ENCODE measurements at regions of chr13 and their contacts with region 1.

Region 1: DNA sequence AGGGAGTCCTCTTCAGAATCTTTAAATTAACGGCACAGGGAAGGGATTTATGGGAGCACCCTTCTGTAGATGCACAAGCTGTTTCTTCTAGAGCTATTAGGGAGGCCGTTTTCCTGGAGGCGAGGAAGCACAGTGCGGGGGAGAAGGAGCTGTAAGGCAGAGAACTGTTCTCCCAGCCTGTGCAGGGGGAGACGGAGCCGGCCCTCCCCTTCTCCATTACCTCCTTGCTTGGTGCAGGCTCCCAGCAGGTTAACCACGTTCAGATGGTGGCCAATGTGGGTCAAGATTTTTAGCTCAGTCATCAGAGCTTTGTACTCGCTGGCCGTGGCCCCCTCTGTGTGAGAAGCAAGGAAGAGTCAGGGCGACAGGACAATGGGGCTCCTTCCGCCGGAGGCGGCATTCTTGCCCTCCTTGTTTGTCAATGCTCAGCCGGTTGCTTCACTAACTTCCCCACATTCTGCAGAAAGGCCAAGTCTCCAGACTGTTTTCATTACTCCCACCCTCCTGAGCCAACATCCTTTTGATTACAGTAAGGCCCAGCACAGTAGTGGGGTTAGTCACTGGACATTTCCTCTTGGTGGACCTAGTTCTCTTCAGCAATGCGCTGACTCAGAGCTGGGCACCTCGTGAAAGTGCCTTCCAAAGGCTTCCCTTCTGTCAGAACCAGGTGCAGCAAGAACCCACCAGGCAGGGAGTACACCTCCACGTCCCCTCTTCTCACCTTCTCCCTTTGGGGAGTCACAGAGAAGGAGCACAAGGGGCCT is 165.4 kb downstream of the FLT1 start:
- DNase-seq: peak in 1 of 2 donors; percentile 43
- ATAC-seq: peak; percentile 59 to 89 (median 74)
- H3K4me3 ChIP-seq: no peak overlapping the region
- H3K27ac ChIP-seq: peak overlapping the region in 7 of 10 donors; percentile 3 to 72 (median 33)
- H3K4me1 ChIP-seq: peaks cover 6 to 53% (median 28%) of the 10 kb centered on the region in 9 donors
- H3K27me3 ChIP-seq: peaks cover 0 to 21% (median 0%) of the 10 kb centered on the region in 7 donors
- CTCF ChIP-seq: no peak

Region 2: DNA sequence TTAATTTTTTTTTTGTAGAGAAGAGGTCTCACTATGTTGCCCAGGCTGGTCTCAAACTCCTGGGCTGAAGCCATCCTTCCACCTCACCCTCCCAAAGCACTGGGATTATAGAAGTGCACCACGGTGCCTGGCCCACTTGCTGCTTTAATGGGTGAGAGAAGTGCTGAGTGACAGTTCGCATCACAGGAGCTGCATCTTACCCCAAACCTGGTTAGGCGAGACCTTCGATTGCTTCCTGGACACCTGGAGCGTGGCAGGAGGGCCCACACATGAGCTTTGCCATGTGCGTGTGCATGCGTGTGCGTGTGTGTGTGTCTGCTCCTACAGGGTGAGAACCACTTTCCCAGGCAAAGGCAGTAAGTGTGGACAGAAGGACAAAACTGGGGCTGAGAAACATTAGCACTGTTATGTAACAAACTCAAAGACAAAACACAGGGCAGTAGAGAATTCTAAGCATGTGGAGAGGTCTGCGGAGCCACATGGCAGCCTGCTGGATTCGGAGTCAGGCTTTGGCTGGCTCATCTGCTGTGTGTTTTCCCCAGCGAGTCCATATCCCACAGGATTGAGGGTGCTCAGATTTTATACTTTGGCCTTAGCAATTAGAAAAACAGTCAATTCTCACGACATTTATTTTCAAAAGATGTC is 867.5 kb before region 1 on chr13:
- intact Hi-C with region 1: no loop called
- DNase-seq: no peak
- ATAC-seq: peak; percentile 56 to 85 (median 72)
- H3K4me3 ChIP-seq: no peak overlapping the region
- H3K27ac ChIP-seq: peak overlapping the region in 5 of 10 donors; percentile 16 to 57 (median 38)
- H3K4me1 ChIP-seq: peaks cover 0 to 19% (median 11%) of the 10 kb centered on the region in 9 donors
- H3K27me3 ChIP-seq: no peaks in the 10 kb centered on the region
- CTCF ChIP-seq: no peak

Region 3: DNA sequence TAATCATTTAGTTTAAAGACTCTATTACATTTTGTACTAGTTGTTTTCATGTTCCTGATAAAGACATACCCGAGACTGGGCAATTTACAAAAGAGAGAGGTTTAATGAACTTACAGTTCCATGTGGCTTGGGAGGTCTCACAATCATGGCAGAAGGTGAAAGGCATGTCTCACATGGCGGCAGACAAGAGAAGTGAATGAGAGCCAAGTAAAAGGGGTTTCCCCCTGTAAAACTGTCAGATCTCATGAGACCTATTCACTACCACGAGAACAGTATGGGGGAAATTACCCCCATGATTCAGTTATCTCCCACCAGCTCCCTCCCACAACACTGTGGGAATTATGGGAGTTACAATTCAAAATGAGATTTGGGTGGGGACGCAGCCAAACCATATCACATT is 62.1 kb before region 1 on chr13:
- intact Hi-C with region 1: no loop called
- DNase-seq: no peak
- ATAC-seq: no peak
- H3K4me3 ChIP-seq: no peak overlapping the region
- H3K27ac ChIP-seq: no peak overlapping the region
- H3K4me1 ChIP-seq: no peaks in the 10 kb centered on the region
- H3K27me3 ChIP-seq: no peaks in the 10 kb centered on the region
- CTCF ChIP-seq: no peak

Region 4: GRCh38 chr13:28301839-28302238 is 27.7 kb before region 1 on chr13:
- intact Hi-C with region 1: no loop called
- DNase-seq: no peak
- ATAC-seq: no peak
- H3K4me3 ChIP-seq: no peak overlapping the region
- H3K27ac ChIP-seq: no peak overlapping the region
- H3K4me1 ChIP-seq: no peaks in the 10 kb centered on the region
- H3K27me3 ChIP-seq: peaks cover 0 to 3% (median 0%) of the 10 kb centered on the region in 7 donors
- CTCF ChIP-seq: no peak

Region 5: DNA sequence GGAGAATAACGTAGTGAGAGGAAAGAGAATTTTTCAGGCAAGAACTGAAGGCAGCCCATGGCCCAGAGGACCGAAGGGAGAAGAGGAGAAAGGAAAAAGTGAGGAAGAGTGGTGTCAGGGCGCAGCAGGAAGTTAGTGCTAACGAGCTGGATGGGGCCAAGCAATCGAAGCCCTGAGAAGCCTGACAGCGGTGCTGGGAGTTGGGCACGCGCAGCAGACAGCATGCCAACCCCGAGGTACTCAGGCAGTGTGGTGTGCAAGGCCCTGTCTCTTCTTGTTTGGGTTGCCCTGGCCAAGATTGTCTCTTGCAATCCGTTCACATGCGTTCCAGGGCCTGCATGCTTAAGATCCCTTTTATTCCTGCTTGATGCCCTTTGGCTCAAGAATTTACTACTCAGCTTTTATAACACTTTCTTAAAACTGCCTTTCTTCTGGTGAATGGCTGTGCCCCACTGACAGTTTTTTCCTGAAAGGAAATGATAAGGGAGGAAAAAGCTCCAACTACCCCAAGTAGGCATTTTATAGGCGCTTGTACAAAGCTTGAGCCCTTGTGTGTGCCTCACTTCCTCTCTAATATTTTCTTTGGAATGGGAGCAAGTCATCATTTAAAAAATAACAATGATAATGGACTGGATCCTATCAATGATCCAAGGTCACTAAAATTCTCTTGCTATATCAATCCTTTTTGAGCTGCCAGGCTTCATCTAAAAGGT is 50.0 kb after region 1 on chr13:
- intact Hi-C with region 1: loop called in 1 of 10 experiments (anchors 5 kb)
- DNase-seq: no peak
- ATAC-seq: peak in 1 of 8 donors; percentile 16
- H3K4me3 ChIP-seq: no peak overlapping the region
- H3K27ac ChIP-seq: peak overlapping the region in 2 of 10 donors; percentile 3 to 49
- H3K4me1 ChIP-seq: peaks cover 0 to 36% (median 19%) of the 10 kb centered on the region in 9 donors
- H3K27me3 ChIP-seq: peaks cover 0 to 74% (median 0%) of the 10 kb centered on the region in 7 donors
- CTCF ChIP-seq: no peak

Region 6: DNA sequence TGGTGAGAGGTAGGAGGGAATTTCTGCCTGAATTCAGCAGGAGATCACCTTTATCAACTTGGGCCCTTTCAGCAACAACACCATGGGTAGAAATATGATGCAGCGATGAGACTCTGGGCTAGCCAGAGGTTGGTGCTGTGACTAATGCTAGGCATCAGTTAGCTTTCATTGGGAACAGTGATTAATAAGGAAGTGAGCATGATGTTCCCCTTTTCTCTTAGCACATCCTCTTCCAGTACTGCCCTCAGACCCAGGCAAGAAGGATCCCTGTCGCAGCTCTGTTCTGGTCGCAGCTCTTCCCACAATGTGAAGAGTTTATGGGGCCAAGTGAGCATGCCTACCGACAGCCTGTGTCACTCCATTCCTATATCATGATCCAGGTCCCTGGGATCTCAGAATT is 64.8 kb after region 1 on chr13:
- intact Hi-C with region 1: loop called in 2 of 10 experiments (anchors 5 to 10 kb)
- DNase-seq: no peak
- ATAC-seq: peak in 5 of 8 donors; percentile 25 to 75 (median 39)
- H3K4me3 ChIP-seq: no peak overlapping the region
- H3K27ac ChIP-seq: peak overlapping the region in 6 of 10 donors; percentile 32 to 74 (median 49)
- H3K4me1 ChIP-seq: peaks cover 0 to 90% (median 32%) of the 10 kb centered on the region in 9 donors
- H3K27me3 ChIP-seq: peaks cover 0 to 3% (median 0%) of the 10 kb centered on the region in 7 donors
- CTCF ChIP-seq: no peak

Region 7: DNA sequence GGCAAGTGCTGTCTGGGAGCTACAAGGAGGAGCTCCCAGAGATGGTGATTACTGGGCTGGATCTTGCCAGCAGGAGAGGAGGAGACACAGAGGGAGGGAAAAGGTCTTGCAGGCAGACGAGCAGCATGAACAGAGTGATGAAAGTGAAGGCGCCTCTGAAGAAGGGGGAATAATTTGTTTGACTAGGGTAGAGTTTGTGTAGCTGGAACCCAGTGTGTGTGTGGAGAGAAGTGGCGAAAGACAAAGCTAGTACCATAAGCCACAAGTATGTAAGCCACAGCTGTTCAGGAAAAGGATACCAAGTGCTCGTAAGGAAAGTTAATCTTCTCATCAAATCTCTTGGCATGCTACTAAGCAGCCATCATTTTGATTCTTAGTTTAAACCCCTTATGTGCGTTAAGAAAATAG is 160.0 kb after region 1 on chr13:
- intact Hi-C with region 1: loop called in 5 of 10 experiments (anchors 5 to 10 kb)
- DNase-seq: no peak
- ATAC-seq: no peak
- H3K4me3 ChIP-seq: peak overlapping the region in 8 of 10 donors; percentile 12 to 85 (median 68)
- H3K27ac ChIP-seq: peak overlapping the region in 5 of 10 donors; percentile 9 to 94 (median 23)
- H3K4me1 ChIP-seq: peaks cover 3 to 86% (median 55%) of the 10 kb centered on the region in 9 donors
- H3K27me3 ChIP-seq: peaks cover 0 to 67% (median 47%) of the 10 kb centered on the region in 7 donors
- CTCF ChIP-seq: no peak

Measured in heart right ventricle (tissue), 16 donors.